Activated naive CD4-positive, alpha-beta T cell treated with anti-CD3 and anti-CD28 coated beads for 36 hours (primary cell): ENCODE measurements at regions of chr19 and their contacts with region 1.

Region 1: DNA sequence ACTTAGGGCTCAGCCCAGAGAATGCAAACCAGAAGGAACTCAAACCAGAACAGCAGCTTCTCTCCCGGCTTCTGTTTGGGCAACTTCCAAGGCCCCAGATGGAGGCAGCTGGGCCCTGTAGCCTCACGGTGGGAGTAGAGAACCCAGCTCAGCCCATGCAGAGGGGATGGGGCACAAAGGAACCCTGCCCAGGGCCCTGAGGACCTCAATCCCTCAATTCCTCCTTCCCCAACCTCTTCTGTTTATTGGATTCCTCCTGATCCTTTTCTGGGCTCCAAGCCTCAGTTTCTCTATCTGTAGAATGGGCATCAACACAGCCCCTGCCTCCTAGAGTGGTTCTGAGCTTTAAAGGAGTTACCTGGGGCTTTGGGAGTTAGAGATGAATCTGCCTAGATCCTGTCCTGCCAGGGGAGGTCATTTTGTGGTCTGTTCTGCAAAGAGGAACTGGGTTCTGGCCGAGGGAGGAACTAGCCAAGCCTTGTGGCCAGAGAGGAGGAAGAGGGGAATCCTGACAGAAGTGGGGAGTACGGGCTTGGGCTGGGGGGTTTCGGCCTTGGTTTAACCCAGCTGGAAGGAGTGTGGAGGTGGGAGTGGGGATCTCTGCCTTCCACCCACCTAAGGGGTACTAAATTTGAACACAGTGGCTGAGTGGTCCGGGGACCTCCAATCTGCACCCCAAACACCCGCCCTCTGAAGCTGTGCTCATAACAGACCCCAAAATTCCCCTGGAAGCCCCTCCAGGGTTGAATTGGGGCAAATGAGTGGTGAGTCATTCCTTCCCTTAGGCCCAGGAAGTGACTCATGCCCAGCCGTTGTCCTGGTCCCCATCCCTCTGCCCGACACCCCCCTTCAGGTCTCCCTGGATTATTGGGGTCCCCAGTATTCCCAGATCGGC is 2.7 kb downstream of the ADGRE5 start:
- DNase-seq: peak; percentile 79
- H3K4me3 Mint-ChIP-seq: peak overlapping the region; percentile 97
- H3K27ac Mint-ChIP-seq: peak overlapping the region; percentile 100
- H3K4me1 Mint-ChIP-seq: peaks cover 36% of the 10 kb centered on the region
- H3K27me3 Mint-ChIP-seq: no peaks in the 10 kb centered on the region

Region 2: GRCh38 chr19:14405758-14406644 is 22.1 kb after region 1 on chr19:
- CTCF ChIA-PET with region 1: interaction called, 7 read pairs
- intact Hi-C with region 1: loop called (anchors 1 kb)
- DNase-seq: peak; percentile 91
- H3K4me3 Mint-ChIP-seq: no peak overlapping the region
- H3K27ac Mint-ChIP-seq: peak overlapping the region; percentile 46
- H3K4me1 Mint-ChIP-seq: peaks cover 26% of the 10 kb centered on the region
- H3K27me3 Mint-ChIP-seq: no peaks in the 10 kb centered on the region

Region 3: DNA sequence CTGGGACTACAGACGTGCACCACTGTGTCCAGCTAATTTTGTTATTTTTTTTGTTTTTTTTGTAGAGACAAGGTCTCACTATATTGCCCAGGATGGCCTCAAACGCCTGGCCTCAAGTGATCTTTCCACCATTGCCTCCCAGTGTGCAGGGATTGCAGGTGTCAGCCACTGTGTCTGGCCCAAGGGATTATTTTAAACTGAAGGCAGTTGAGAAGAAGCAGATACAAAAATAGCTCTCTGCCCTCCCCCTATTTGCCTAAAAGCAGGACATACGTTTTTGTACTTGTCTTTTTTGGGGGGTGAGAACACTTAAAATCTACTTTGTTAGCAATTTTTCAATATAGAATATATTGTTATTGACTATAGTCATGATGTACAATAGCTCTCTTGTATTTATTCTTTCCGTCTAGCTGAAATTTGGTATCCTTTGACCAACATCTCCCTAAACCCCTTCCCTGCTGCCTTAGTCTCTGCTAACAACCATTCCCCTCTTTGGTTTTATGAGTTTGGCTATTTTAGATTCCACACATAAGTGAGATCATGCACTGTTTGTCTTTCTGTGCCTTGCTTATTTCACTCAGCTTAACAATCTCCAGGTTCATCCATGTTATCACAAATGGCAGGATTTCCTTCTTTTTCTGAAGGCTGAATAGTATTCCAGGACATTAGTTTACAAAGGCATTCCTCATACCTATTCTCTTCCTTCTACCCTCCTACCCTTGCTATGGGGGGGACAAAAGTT is 255.8 kb after region 1 on chr19:
- CTCF ChIA-PET with region 1: no interaction called
- intact Hi-C with region 1: no loop called
- DNase-seq: no peak
- H3K4me3 Mint-ChIP-seq: no peak overlapping the region
- H3K27ac Mint-ChIP-seq: no peak overlapping the region
- H3K4me1 Mint-ChIP-seq: no peaks in the 10 kb centered on the region
- H3K27me3 Mint-ChIP-seq: peaks cover 7% of the 10 kb centered on the region